Mucosa of descending colon (tissue), 3 donors: ENCODE measurements at regions of chr3 and their contacts with region 1.

Region 1: GRCh38 chr3:14921078-14921616 is 26.2 kb upstream of the NR2C2 start:
- DNase-seq: peak; percentile 87 to 94 (median 91)
- ATAC-seq: peak; percentile 96
- H3K4me3 ChIP-seq: no peak overlapping the region
- H3K4me1 ChIP-seq: no peaks in the 10 kb centered on the region
- CTCF ChIP-seq: peak; percentile 94

Region 2: GRCh38 chr3:14565868-14566588 is 355.1 kb before region 1 on chr3:
- intact Hi-C with region 1: no loop called
- DNase-seq: no peak
- ATAC-seq: no peak
- H3K4me3 ChIP-seq: no peak overlapping the region
- H3K4me1 ChIP-seq: peaks cover 2% of the 10 kb centered on the region
- CTCF ChIP-seq: no peak

Region 3: DNA sequence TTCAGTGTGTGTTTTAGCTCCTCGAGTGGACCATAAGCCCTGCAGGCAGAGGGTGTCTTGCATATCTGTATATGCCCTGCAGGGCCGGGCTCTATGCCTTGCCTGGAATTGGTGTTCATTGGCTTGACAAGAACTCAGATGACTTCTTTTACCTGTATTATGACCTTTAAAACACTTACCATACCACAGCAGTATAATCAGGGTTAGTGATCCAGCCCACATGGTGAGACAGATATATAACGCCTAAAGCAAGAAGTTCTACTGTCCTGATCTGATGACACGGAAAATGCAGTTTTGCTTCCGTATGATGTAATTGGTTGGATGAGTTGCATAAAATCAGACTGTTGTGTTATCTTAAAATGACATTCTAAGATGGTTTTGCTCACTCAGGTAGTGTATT is 260.2 kb before region 1 on chr3:
- intact Hi-C with region 1: loop called in 1 of 2 experiments (anchors 10 kb)
- DNase-seq: no peak
- ATAC-seq: no peak
- H3K4me3 ChIP-seq: no peak overlapping the region
- H3K4me1 ChIP-seq: no peaks in the 10 kb centered on the region
- CTCF ChIP-seq: no peak

Region 4: GRCh38 chr3:14678015-14678503 is 243.1 kb before region 1 on chr3:
- intact Hi-C with region 1: loop called in 1 of 2 experiments (anchors 10 kb)
- DNase-seq: no peak
- ATAC-seq: peak; percentile 25
- H3K4me3 ChIP-seq: no peak overlapping the region
- H3K4me1 ChIP-seq: no peaks in the 10 kb centered on the region
- CTCF ChIP-seq: no peak

Region 5: DNA sequence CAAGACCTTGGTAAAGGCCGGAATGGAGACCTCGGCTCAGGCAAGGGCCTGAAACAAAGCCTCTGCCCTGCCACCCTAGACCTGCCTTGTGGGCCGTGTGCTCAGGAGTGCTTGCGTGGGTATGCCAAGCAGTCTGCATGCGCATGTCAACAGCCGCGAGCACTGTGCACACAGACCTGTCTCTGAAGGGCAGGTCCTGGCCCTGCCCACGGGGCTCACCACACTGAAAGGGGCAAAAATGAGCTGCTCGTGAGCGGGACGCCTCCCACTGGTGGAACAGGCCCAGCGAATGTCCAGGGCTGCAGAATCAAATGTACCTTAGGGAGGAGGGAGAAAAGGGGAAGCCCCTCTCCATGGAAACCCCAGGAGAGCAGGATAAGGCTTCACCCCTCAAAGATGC is 146.7 kb before region 1 on chr3:
- intact Hi-C with region 1: no loop called
- DNase-seq: no peak
- ATAC-seq: no peak
- H3K4me3 ChIP-seq: no peak overlapping the region
- H3K4me1 ChIP-seq: no peaks in the 10 kb centered on the region
- CTCF ChIP-seq: no peak

Region 6: DNA sequence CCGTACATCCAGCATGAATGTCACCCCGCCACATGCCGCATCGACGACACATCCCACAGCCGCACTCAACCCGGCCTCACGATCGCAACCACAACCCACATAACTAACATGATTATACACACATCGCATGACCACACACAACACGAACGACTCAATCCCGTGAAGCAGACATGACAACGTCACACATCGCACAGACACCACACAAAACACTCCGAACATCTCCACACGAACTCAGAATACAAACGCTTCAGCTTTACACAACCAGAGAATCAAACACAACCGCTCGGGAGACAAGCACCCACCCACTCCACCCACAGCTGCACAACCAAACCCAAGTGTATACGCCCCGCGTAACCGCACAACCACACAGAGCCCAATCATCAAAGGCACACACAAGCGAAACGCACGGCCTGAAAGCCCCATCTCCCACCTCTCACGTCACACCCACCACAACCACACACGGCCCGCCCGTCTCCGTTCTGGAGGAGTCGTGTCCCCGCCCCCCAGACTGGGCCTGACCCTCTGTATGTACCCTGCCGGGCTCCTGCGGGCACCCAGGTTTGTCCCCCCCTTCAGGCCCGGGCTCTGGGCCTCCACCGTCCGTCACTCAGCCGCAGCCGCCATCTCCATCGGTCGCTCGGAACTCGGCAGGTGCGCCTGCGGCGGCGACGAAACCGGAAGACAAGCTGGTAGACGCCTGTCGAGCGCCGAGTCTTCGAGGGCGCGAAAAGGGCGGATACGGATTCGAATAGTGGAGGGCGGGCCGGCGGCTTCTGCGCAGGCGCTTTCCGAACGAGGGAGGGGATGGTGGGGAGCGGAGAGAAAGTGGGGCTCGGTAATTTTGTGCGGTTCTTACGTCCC is 177.6 kb after region 1 on chr3 and contains the start of gene RBSN:
- intact Hi-C with region 1: no loop called
- DNase-seq: peak; percentile 96 to 97 (median 96)
- ATAC-seq: peak; percentile 95
- H3K4me3 ChIP-seq: peak within 1 kb of the TSS; percentile 46
- H3K4me1 ChIP-seq: peaks cover 17% of the 10 kb centered on the region
- CTCF ChIP-seq: no peak
- total RNA-seq, gene RBSN: 16.5 to 36.8 (median 18.2) TPM